Activated CD8-positive, alpha-beta memory T cell treated with anti-CD3 and anti-CD28 coated beads, Interleukin-2, amount 10 ng/mL, durations not matched to agents 7 days and 5 days (primary cell): ENCODE measurements at regions of chr19 and their contacts with region 1.

Region 1: DNA sequence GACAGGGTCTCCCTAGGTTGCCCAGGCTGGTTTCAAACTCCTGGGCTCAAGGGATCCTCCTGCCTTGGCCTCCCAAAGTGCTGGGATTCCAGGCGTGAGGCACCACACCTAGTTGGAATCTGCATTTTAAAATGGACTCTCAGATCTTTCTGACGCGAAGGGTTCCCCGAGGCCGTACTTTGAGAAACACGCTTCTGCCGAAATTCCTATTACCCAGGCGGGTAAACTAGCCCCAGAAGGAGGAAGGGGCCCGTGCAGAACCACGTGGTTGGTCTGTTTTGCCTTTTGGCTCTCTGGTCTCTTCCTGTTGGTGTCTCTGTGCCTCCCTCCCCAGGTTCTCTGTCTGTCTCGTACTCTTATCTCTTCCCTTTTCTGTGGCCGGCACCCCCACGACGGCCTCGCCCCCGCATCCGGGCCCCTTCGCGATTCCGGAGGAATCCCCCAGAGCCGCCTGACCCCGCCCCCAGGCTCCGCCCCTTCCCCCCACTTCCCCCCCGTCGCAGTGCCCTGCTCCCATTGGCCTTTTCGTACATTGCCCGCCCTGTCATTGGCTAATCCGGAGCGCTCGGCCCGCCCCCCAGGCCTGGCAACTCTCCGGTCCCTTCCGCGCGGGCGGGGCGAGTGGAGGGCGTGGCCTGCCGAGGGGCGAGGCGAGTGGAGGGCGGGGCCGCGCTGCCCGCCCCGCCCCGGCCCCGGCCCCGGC is at the start of gene TNFAIP8L1:
- DNase-seq: peak; percentile 99
- ATAC-seq: peak; percentile 94
- H3K4me3 Mint-ChIP-seq: peak within 1 kb of the TSS; percentile 93
- H3K27ac Mint-ChIP-seq: peak within 1 kb of the TSS; percentile 93
- H3K4me1 Mint-ChIP-seq: peaks cover 38% of the 10 kb centered on the region
- H3K27me3 Mint-ChIP-seq: no peaks in the 10 kb centered on the region
- total RNA-seq, gene TNFAIP8L1: 15.7 to 20.1 TPM

Region 2: GRCh38 chr19:4471403-4472173 is 167.4 kb before region 1 on chr19:
- CTCF ChIA-PET with region 1: interaction called, 13 read pairs
- DNase-seq: peak; percentile 99
- ATAC-seq: peak; percentile 91
- H3K4me3 Mint-ChIP-seq: no peak overlapping the region
- H3K27ac Mint-ChIP-seq: no peak overlapping the region
- H3K4me1 Mint-ChIP-seq: peaks cover 23% of the 10 kb centered on the region
- H3K27me3 Mint-ChIP-seq: no peaks in the 10 kb centered on the region

Region 3: DNA sequence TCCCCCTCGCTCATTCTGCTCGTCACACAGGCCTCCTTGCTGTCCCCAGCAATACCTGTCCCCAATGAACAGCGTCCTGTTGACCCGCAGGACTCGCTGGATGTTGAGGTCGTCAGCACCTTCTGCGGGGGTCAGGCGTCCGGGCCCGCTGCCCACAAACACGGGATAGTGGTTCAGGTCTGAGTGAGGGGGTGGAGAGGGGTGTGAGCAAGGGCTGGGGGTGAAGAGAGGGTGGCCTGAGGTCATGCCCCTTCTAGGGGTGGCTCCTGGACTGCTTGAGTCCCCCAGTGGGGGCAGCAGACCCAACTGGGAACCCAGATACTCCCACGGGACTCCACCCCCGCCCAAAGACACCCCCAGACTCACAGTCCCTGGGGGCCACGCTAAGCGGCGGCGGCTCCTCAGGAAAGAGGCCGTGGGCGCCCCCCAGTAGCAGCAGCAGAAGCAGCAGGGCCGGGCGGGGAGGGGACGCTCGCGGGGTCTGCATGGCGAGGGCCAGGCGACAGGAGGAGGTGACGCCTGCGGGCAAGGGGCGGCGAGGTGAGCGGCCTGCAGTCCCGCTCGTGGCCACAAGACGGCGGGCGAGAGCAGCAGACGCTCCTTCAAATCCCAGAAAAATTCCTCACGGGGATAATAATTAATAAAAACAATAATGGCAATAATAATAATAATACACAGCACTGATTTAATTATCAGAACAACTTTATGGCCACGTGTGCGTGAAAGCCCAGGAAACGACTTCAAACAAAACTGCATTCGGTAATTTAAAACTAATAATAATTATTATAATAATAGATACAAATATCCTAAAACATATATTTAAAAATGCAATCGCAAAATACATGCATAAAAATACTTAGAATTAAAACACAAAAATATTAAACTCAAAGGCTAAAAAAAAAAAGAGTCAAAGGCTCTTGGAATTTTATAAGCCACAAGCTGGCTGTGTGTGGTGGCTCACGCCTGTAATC is 80.7 kb before region 1 on chr19:
- CTCF ChIA-PET with region 1: interaction called, 14 read pairs
- DNase-seq: no peak
- ATAC-seq: peak; percentile 40
- H3K4me3 Mint-ChIP-seq: no peak overlapping the region
- H3K27ac Mint-ChIP-seq: no peak overlapping the region
- H3K4me1 Mint-ChIP-seq: no peaks in the 10 kb centered on the region
- H3K27me3 Mint-ChIP-seq: no peaks in the 10 kb centered on the region

Region 4: GRCh38 chr19:4576016-4576933 is 62.7 kb before region 1 on chr19:
- CTCF ChIA-PET with region 1: interaction called, 74 read pairs
- DNase-seq: peak; percentile 79
- ATAC-seq: peak; percentile 64
- H3K4me3 Mint-ChIP-seq: no peak overlapping the region
- H3K27ac Mint-ChIP-seq: no peak overlapping the region
- H3K4me1 Mint-ChIP-seq: no peaks in the 10 kb centered on the region
- H3K27me3 Mint-ChIP-seq: peaks cover 36% of the 10 kb centered on the region

Region 5: GRCh38 chr19:4791170-4792018 is 152.4 kb after region 1 on chr19 and contains the start of gene FEM1A:
- CTCF ChIA-PET with region 1: interaction called, 10 read pairs
- DNase-seq: peak; percentile 99
- ATAC-seq: peak; percentile 97
- H3K4me3 Mint-ChIP-seq: peak within 1 kb of the TSS; percentile 82
- H3K27ac Mint-ChIP-seq: peak within 1 kb of the TSS; percentile 87
- H3K4me1 Mint-ChIP-seq: peaks cover 35% of the 10 kb centered on the region
- H3K27me3 Mint-ChIP-seq: no peaks in the 10 kb centered on the region
- total RNA-seq, gene FEM1A: 11.5 to 16.8 TPM